MCF 10A (cell line): ENCODE measurements at regions of chr2 and their contacts with region 1.

Region 1: DNA sequence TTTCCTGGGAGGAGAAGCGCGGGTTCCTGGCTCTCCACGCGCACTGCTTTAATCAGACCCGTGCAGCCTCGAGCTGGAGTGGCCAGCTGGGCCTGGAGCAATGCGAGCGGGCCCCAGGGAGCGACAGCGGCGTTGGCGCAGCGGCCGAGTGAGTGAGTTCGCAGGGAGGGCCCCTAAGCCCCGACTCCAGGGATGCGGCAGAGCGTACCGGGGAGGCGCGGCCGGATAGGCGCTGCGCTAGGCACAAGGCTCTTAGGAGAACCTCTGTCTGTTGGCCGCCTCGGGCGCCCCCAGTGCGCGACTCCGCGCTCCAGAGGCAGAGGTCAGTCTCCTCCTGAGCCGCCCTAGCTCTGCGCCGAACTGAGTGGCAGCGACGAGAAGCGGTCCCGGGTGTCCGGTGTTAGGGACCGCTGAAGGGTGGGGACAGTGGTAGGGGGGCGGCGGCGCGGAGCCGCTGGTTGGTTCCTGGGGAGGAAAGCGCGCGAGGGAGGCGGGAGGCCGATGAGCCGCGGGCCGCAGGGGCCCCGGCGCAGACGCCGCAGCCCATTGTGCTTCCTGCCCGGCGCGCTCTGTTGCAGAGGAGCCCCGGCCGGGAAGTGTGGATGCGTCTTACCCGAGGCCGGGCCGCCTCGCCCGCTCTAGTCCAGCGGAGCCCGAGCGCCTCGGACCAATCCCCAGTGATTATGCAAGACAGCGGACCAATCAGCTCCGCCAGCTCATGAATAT is 410 bp upstream of the DLX1 start:
- DNase-seq: peak; percentile 96
- H3K4me3 Mint-ChIP-seq: peak overlapping the region; percentile 80
- H3K27ac Mint-ChIP-seq: peak overlapping the region; percentile 47
- H3K4me1 Mint-ChIP-seq: no peaks in the 10 kb centered on the region
- H3K27me3 Mint-ChIP-seq: no peaks in the 10 kb centered on the region
- CTCF ChIP-seq: no peak

Region 2: GRCh38 chr2:171922230-171923022 is 162.5 kb before region 1 on chr2 and contains the start of gene HAT1:
- CTCF ChIA-PET with region 1: no interaction called
- POLR2A ChIA-PET with region 1: interaction called, 17 read pairs
- intact Hi-C with region 1: no loop called
- DNase-seq: peak; percentile 98
- H3K4me3 Mint-ChIP-seq: peak within 1 kb of the TSS; percentile 90
- H3K27ac Mint-ChIP-seq: peak within 1 kb of the TSS; percentile 97
- H3K4me1 Mint-ChIP-seq: peaks cover 16% of the 10 kb centered on the region
- H3K27me3 Mint-ChIP-seq: no peaks in the 10 kb centered on the region
- CTCF ChIP-seq: no peak
- total RNA-seq, gene HAT1: 40.7 and 41.8 TPM in 2 replicates

Region 3: DNA sequence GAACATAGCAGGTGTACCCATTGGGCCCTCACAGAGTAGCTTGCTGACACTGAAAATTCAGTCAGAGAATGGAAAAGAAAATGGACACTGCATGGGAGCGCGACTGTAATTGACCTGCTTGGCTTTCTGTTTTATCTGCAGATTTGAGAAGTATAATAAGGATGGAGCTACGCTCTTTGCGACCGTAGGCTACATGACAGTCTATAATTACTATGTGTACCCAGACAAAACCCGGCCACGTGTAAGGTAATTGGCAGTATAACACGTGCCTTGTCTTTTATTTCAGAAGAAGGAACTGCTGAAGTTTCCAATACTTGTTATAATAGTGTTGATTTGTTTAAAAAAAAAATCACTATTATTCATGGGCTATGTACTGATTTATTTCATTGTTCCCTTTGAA is 118.6 kb before region 1 on chr2:
- CTCF ChIA-PET with region 1: no interaction called
- POLR2A ChIA-PET with region 1: no interaction called
- intact Hi-C with region 1: no loop called
- DNase-seq: no peak
- H3K4me3 Mint-ChIP-seq: no peak overlapping the region
- H3K27ac Mint-ChIP-seq: no peak overlapping the region
- H3K4me1 Mint-ChIP-seq: no peaks in the 10 kb centered on the region
- H3K27me3 Mint-ChIP-seq: no peaks in the 10 kb centered on the region
- CTCF ChIP-seq: no peak